ENCODE measurements at regions of chr19 and their contacts with region 1.

Region 1: DNA sequence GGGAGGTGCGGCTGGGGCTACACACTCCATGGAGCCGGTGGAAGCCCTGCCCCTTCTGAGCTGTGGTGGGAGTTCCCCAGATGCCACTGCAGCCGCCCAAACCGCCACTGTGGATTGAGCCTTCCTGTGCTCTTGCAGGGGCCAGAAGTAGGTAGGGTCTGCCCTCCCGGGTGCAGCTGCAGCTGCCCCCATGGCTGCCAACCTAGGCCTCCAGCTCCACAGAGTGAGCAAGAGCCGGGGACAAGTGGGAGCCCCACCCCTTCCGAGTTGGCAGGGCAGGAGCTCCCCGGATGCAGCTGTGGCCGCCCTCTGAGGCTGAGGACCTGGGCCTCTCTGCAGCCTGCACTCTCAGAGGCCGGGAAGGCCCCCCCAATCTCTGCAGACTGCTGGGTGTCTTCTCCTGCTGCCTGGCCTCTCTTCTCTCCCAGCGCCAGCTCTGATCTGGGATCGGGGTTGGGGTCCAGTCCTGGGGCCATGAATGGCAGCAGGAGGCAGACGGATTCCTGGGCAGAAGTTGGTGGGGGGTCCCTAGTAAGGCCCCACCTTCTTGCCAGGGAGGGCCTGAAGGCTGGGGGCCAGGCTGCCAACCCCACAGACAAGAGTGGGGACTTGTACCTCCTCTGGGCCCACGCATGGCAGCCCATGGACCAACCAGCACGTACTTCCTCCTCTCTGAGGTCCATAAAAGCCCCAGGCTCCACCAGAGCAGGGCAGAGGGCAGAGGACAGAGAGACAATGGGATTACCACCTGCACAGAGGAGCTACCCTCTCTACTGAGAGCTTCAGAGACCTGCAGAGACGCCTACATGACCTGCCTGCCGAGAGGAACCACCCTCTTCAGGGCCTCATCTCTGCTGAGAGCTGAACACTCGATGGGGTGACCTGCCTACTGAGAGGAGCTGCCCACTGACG is 28.9 kb downstream of the AP2S1 start:
- DNase-seq: peak; percentile 30 to 64 (median 55)
- ATAC-seq: peak; percentile 88
- H3K4me3 ChIP-seq: peak overlapping the region; percentile 19
- H3K4me3 Mint-ChIP-seq: peak overlapping the region; percentile 12 to 80 (median 63)
- H3K27ac ChIP-seq: peak overlapping the region; percentile 73
- H3K27ac Mint-ChIP-seq: peak overlapping the region; percentile 85 to 96 (median 93)
- H3K4me1 ChIP-seq: peaks cover 23 to 28% of the 10 kb centered on the region in 2 donors
- H3K4me1 Mint-ChIP-seq: peaks cover 21 to 47% (median 31%) of the 10 kb centered on the region in 7 donors
- H3K27me3 ChIP-seq: no peaks in the 10 kb centered on the region
- H3K27me3 Mint-ChIP-seq: no peaks in the 10 kb centered on the region

Region 2: DNA sequence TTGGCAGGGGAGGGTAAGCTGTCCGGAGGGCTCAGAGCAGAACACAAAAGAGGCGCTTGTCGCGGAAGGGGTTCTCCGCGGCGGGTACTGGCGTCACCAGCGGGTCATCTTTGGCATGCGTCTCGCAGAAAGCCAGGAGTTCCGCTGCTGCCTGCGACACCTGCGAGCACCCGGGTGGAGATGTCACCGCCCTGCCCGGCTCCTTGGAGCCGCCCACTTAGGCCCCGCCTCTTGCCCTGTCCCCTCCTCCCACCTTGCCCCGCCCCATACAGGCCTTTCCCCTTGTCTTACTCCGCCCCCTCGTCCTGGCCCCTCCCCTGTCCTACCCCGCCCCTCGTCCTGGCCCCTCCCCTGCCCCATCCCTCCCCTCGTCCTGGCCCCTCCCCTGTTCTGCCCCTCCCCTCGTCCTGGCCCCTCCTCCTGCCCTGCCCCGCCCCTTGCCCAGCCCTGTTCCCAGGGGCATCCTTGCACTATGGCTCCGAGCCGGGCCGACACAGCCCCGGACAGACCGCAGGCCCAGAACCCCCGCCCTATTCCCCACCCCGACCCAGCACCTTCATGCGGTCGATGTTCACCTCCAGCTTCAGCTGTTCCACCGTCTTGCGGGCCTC is 187.6 kb before region 1 on chr19:
- CTCF ChIA-PET with region 1: no interaction called
- POLR2A ChIA-PET with region 1: no interaction called
- intact Hi-C with region 1: no loop called
- DNase-seq: peak; percentile 86 to 99 (median 97)
- ATAC-seq: peak; percentile 91
- H3K4me3 ChIP-seq: peak overlapping the region; percentile 62
- H3K4me3 Mint-ChIP-seq: peak overlapping the region in 9 of 10 donors; percentile 81 to 90 (median 87)
- H3K27ac ChIP-seq: peak overlapping the region; percentile 90
- H3K27ac Mint-ChIP-seq: peak overlapping the region in 8 of 9 donors; percentile 66 to 98 (median 94)
- H3K4me1 ChIP-seq: peaks cover 22 to 23% of the 10 kb centered on the region in 2 donors
- H3K4me1 Mint-ChIP-seq: peaks cover 10 to 32% (median 23%) of the 10 kb centered on the region in 7 donors
- H3K27me3 ChIP-seq: no peaks in the 10 kb centered on the region
- H3K27me3 Mint-ChIP-seq: peaks cover 0 to 13% (median 0%) of the 10 kb centered on the region in 5 donors

Region 3: DNA sequence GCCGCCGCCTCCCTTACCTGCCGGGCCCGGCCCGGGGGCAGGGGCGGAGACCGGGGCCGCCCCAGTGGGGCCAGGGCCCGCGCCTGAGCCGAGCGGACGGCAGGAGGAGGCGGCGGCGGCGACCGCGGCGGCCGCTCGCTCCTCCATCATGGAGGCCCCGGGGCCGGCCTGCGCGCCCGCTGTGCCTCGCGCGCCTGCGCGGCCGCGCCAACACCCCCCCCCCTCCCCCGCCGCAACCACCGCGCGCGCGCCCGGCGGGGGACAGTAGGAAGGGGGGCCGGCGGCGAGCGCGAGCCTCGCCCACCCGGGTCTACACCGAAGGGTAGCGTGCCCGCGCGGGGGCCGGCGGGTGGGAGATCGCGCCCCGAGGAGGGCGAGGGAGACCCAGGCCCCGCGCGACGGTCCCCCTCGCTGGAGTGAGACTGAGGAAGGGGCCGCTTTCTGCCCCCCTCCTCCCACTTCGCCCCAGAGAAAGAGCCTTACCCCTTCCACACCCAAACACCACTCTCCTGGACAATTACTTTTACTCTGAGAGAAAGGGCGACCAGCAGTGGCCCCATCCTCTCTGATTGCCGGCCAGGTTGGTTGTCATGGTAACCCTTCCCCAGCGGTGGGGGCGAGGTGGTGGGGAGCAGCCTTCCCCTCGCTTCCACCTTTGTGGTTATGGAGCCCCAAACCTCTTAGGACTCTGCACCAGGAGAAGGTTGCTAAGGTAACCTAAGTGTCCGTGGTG is 75.3 kb before region 1 on chr19 and contains the start of gene STRN4:
- CTCF ChIA-PET with region 1: no interaction called
- POLR2A ChIA-PET with region 1: interaction called, 3 read pairs
- intact Hi-C with region 1: loop called in 1 of 2 experiments (anchors 5 kb)
- DNase-seq: peak in 8 of 9 donors; percentile 29 to 65 (median 50)
- ATAC-seq: peak; percentile 87
- H3K4me3 ChIP-seq: peak within 1 kb of the TSS; percentile 73
- H3K4me3 Mint-ChIP-seq: peak within 1 kb of the TSS; percentile 84 to 97 (median 90)
- H3K27ac ChIP-seq: peak within 1 kb of the TSS; percentile 91
- H3K27ac Mint-ChIP-seq: peak within 1 kb of the TSS; percentile 74 to 94 (median 87)
- H3K4me1 ChIP-seq: peaks cover 21 to 26% of the 10 kb centered on the region in 2 donors
- H3K4me1 Mint-ChIP-seq: peaks cover 43 to 64% (median 58%) of the 10 kb centered on the region in 7 donors
- H3K27me3 ChIP-seq: no peaks in the 10 kb centered on the region
- H3K27me3 Mint-ChIP-seq: no peaks in the 10 kb centered on the region
- total RNA-seq, gene STRN4: 81.3 to 120 (median 90.4) TPM

Region 4: GRCh38 chr19:46766569-46767317 is 55.0 kb before region 1 on chr19:
- CTCF ChIA-PET with region 1: interaction called, 4 read pairs
- POLR2A ChIA-PET with region 1: no interaction called
- intact Hi-C with region 1: loop called in 1 of 2 experiments (anchors 5 kb)
- DNase-seq: peak in 7 of 9 donors; percentile 37 to 58 (median 46)
- ATAC-seq: peak; percentile 80
- H3K4me3 ChIP-seq: no peak overlapping the region
- H3K4me3 Mint-ChIP-seq: peak overlapping the region in 1 of 10 donors; percentile 46
- H3K27ac ChIP-seq: no peak overlapping the region
- H3K27ac Mint-ChIP-seq: peak overlapping the region in 2 of 9 donors; percentile 16 to 70
- H3K4me1 ChIP-seq: no peaks in the 10 kb centered on the region
- H3K4me1 Mint-ChIP-seq: peaks cover 0 to 7% (median 5%) of the 10 kb centered on the region in 7 donors
- H3K27me3 ChIP-seq: no peaks in the 10 kb centered on the region
- H3K27me3 Mint-ChIP-seq: no peaks in the 10 kb centered on the region

Region 5: GRCh38 chr19:46788262-46788967 is 33.3 kb before region 1 on chr19 and contains the start of gene SLC1A5:
- CTCF ChIA-PET with region 1: interaction called, 4 read pairs
- POLR2A ChIA-PET with region 1: interaction called, 14 read pairs
- intact Hi-C with region 1: loop called (anchors 1 kb)
- DNase-seq: peak; percentile 77 to 98 (median 84)
- ATAC-seq: peak; percentile 93
- H3K4me3 ChIP-seq: peak within 1 kb of the TSS; percentile 77
- H3K4me3 Mint-ChIP-seq: peak within 1 kb of the TSS; percentile 85 to 91 (median 89)
- H3K27ac ChIP-seq: peak within 1 kb of the TSS; percentile 62
- H3K27ac Mint-ChIP-seq: peak within 1 kb of the TSS; percentile 25 to 92 (median 86)
- H3K4me1 ChIP-seq: peaks cover 31 to 44% of the 10 kb centered on the region in 2 donors
- H3K4me1 Mint-ChIP-seq: peaks cover 19 to 72% (median 60%) of the 10 kb centered on the region in 7 donors
- H3K27me3 ChIP-seq: no peaks in the 10 kb centered on the region
- H3K27me3 Mint-ChIP-seq: peaks cover 0 to 3% (median 0%) of the 10 kb centered on the region in 5 donors
- total RNA-seq, gene SLC1A5: 3.5 to 120 (median 5.3) TPM

Measured in naive thymus-derived CD4-positive, alpha-beta T cell (primary cell).